ENCODE measurements at regions of chr5 and their contacts with region 1.

Region 1: DNA sequence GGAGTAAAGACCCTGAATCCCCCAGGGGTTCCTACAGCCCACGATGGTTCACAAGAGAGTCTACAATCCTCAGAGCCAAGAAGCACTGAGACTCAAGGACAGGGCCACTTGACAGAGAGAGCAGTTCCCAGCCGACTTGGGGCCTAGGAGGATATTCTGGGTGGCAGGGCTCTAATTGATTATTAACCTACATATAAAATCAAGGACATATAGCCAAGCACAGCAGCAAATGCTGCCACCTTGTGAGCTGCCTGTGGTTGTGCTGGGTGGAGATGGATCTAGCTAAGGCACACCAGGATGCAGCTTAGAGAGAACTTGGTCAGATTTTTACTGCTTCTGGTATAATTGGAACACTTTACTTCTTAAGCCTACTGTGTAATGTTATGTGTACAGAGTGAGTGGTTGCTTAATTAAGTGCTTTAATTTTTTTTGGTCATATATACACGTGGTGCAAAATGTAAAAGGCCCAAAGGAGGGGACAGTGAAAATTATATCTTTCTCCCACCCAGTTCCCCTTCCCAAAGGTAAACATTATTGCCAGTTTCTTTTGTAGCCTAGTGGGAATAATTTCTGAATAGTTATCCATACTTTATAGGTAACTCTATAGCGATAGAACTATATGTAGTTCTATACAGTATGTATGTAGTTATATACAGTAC is 78.8 kb downstream of the F2RL2 start:
- DNase-seq: no peak
- ATAC-seq: no peak
- H3K4me3 ChIP-seq: no peak overlapping the region
- H3K27ac ChIP-seq: no peak overlapping the region
- H3K4me1 ChIP-seq: no peaks in the 10 kb centered on the region
- H3K27me3 ChIP-seq: no peaks in the 10 kb centered on the region
- CTCF ChIP-seq: no peak
- POLR2A ChIP-seq: no peak

Region 2: GRCh38 chr5:76219636-76220035 is 324.8 kb before region 1 on chr5:
- in situ Hi-C with region 1: no loop called
- intact Hi-C with region 1: loop called (anchors 5 kb)
- DNase-seq: no peak
- ATAC-seq: no peak
- H3K4me3 ChIP-seq: no peak overlapping the region
- H3K27ac ChIP-seq: no peak overlapping the region
- H3K4me1 ChIP-seq: no peaks in the 10 kb centered on the region
- H3K27me3 ChIP-seq: no peaks in the 10 kb centered on the region
- CTCF ChIP-seq: no peak
- POLR2A ChIP-seq: no peak